Cardiac septum (tissue), 1 donor: ENCODE measurements at regions of chr1 and their contacts with region 1.

Region 1: DNA sequence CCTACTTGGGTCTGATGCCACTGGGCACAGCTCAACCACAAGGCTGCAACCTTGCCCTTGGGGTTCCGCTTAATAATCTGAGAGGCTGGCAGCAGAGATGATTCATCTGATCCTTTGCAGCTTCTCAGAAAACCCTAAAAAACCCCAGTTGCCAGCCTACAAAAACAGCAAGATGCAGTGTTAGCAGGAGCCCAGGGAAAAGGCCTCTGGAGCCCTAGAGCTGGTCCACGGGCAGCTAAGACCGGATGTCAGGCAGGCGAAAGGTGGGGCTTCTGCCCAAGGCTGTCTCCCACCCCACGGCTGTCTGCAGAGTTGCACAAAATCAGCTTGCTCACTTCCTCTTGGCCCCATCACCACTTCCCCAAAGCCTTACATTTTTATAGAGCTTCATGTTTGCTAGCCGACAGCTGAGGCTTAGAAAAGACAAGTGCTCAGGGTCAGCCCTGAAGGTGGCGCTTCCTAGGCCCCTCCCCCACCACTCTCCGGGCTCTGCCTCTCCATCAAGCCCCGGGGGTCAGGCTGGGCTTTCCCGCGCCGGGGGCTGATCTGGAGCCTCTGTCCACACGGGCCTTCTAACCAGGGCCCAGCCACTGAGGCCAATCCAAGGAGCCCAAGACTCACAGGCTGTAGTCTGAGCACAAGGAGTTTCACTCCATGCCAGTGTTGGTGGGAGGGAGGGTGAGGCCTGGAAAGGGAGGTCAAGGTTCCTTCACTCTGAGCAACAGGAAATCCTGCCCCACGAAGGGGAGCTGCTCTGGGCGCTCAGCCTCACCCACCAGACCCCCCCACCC is 4.2 kb upstream of the ADORA3 start:
- DNase-seq: peak; percentile 90

Region 2: DNA sequence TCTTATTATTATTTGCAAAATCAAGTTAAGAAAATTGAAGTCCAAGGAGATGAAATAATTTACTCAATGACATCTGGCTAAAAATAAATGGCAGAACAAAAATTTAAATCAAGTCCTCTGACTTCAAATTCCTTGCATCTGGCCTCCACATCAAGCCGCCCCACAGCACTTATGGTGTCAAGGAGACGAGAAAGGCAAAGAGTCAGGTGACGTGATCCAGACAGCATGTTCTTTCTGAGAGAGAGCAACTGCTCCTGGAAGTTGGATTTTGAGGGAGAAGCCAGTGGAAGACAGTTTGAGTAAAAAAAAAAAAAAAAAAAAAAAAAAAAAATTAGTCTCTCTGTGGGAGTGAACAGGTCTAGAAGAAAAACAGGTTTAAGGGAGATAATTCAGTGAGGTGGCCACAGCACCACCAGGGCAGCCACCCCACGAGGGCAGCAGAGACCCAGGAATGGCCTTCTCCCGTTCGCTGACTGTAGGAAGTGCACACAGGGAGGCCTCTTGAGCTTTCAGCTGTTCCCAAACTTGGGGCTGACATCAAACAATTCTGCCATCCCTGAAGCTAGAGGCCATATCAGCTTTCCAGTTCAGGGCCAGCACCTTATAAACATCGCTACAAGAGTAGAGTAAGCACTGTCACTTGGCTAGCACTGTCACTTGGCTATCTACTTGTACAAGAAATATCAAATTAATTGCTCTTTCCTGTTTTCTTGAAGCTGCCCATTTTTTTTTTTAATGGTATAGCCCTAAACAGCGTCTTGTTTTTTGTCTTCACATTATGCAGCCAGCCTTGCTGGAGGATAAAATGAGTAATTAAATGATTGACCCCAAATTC is 26.0 kb before region 1 on chr1:
- intact Hi-C with region 1: loop called (anchors 2 kb)
- DNase-seq: peak; percentile 93

Region 3: DNA sequence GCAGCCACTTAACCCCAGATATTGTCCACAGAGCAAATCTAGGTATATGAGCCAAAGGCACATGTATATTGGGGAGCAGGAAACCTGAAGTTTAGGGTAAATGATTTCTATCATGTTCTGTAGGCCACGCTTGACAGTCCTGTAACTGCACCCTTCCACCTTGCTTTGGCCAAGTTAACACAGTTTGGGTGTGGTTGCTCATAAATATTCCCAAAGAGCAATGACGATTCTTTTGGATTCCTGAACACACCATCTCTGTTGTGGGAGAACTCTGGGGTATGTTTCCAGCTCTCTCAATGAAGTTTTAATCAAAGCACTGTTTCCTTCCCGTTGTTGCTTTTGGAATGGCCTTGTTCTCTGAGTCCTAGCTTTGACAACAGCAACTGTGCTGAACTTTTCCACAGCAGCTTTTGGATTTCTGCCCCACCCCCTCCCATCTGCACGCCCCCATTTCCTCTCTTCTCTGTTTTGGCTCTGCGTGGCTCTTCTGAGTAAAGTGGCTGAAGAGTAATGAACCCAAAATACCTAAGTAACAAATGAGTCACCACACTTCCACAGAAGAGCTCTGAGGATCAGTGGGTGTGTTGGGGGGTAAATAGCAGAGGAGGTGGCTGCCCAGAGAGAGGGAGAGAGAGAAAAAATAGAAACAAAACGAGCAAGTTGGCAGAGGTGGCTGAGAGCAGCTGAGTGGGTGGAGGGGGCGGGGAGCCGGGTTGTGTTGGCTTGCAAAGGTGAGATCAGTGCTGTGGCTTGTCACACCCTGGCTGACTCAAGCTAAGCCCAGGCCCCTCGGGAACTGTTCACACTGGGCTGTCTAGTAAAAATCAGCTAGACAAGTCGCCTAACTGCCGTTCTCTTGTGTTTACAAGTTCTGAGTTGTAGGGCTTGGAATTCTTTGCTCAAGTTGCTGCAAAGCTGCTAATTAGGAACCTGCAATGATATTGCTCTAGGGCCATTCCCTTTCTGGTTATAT is 85.1 kb after region 1 on chr1:
- intact Hi-C with region 1: loop called (anchors 2 kb)
- DNase-seq: peak; percentile 91

Region 4: DNA sequence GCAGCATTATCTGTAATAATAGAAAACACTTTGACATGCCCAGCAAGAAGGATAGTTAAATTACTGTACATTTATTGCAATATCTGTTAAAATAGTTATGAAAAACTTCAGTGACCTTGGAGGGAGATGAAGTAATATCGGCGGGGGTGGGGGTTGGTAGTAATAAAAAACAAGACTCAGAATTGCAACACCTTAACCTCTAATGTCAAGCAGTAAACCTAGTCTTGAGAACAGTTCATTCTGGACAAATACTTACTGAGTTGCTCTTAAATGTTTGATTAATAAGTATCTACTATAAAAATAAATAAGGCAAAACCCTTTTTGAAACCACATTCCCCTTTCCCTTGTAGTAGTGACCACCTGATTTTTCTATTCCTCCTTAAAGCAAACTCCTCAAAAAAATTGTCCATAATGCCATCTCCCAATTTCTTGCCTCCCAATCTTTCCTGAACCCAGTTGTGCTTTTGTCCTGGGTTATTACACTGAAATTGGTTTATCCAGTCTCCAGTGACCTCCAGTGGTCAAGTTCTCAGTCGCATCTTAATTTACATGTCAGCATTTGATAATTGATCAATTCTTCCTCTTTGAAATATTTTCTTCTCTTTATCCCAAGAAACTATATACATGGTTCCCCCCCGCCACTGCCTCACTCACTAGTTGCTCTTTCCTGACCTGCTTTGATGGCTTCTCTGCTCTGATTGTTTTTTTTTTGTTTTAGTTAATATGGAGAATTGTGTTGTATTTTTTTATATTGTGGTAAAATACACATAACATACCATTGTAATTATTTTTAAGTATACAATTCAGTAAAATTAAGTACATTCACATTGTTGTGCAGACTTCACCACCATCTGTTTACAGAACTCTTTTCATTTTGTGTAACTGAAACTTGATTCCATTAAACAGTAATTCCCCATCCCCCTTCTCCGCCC is 148.7 kb after region 1 on chr1:
- intact Hi-C with region 1: loop called (anchors 2 kb)
- DNase-seq: no peak

Region 5: GRCh38 chr1:111739194-111739924 is 231.8 kb after region 1 on chr1 and contains the start of gene INKA2:
- intact Hi-C with region 1: loop called (anchors 5 kb)
- DNase-seq: peak; percentile 98
- total RNA-seq, gene INKA2: 13.7 TPM

Region 6: DNA sequence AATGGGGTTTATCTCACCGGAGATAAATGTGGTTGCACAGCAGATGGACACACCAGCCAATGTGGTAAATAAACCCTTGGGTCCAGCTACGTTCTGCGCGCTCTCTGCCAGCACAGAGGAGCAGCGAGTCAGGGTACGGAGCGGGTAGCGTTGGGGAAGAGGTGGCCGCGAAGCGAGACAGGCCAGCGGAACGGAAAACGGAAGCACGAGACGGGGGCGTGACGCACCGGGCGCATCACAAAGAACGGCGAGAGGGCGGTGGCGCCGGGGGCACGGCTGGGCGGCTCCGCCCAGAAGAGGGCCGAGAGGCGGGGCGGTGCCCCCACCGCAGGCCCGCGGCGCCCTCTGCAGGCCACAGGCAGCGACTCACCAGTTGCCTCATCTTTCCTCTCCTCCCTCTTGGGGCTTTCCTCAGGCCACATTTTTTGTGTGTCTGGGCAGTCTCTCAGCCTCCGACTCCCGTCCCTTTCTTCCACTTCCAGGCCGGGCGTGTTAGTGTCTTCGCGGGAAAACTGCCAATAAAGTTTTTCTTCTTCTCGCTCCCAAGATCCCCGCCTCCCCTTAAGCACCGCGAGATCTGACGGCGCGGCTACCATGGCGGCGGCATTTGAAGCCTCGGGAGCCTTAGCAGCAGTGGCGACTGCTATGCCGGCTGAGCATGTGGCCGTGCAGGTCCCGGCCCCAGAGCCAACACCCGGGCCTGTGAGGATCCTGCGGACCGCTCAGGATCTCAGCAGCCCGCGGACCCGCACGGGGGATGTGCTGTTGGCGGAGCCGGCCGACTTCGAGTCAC is 247.9 kb after region 1 on chr1 and contains the start of gene DDX20:
- intact Hi-C with region 1: loop called (anchors 5 kb)
- DNase-seq: peak; percentile 98
- total RNA-seq, gene DDX20: 7.6 TPM